ENCODE measurements at regions of chr6 and their contacts with region 1.

Region 1: GRCh38 chr6:110815217-110816109 is at the start of gene CDK19:
- DNase-seq: peak; percentile 99
- total RNA-seq, gene CDK19: 12.0 to 12.7 TPM

Region 2: DNA sequence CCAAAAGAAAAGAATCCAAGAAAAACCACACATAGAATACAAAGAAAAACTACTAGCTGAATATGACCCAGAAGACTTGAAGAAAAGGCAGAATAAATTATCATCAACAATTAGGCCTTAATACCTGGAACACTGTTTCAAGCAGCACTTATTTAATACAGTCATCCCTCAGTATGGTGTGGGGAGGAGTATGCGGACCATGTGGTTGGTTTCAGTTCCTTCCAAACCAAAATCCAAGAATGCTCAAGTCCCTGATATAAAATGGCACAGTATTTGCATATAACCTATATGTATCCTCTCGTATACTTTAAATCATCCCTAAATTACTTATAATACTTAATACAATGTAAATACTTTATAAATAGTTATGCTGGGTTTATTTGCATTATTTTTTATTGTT is 16.3 kb before region 1 on chr6:
- intact Hi-C with region 1: no loop called
- DNase-seq: no peak

Region 3: GRCh38 chr6:110828396-110828795 is 12.9 kb after region 1 on chr6:
- intact Hi-C with region 1: no loop called
- DNase-seq: no peak

Region 4: GRCh38 chr6:110873981-110874879 is 58.8 kb after region 1 on chr6 and contains the start of gene AMD1:
- intact Hi-C with region 1: loop called (anchors 2 to 10 kb)
- DNase-seq: peak; percentile 99
- total RNA-seq, gene AMD1: 39.7 to 57.9 TPM

Region 5: GRCh38 chr6:110958329-110959192 is 143.1 kb after region 1 on chr6 and contains the start of gene GTF3C6:
- intact Hi-C with region 1: loop called in 1 of 2 experiments (anchors 10 kb)
- DNase-seq: peak; percentile 98
- total RNA-seq, gene GTF3C6: 56.6 to 63.8 TPM

Measured in posterior vena cava (tissue), 2 donors.